A673 (cell line): ENCODE measurements at regions of chr6 and their contacts with region 1.

Region 1: GRCh38 chr6:30130887-30131862 is 4.8 kb upstream of the TRIM40 start:
- DNase-seq: peak; percentile 88
- H3K4me3 ChIP-seq: no peak overlapping the region
- H3K27ac ChIP-seq: no peak overlapping the region
- H3K4me1 ChIP-seq: no peaks in the 10 kb centered on the region
- H3K27me3 ChIP-seq: peaks cover 41% of the 10 kb centered on the region
- CTCF ChIP-seq: peak; percentile 100

Region 2: DNA sequence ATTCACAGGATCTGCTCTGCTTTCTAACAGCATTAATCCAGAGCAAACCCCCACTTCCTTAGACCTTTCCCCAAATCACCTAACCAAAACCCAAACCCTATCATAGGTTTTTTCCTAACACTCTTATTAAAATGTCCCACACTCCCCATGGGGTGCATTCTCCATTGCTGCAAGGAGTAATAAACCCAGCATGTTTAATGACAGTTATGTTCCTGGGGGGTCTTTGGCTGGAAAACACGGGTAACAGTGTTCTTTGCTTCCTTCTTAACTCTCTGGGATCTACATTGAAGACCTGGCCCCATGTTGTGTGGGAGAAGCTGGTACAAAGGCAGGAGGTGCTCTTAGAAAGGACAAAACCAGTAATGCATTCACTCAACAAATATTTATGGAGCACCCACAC is 34.3 kb before region 1 on chr6:
- CTCF ChIA-PET with region 1: interaction called, 11 read pairs
- POLR2A ChIA-PET with region 1: no interaction called
- intact Hi-C with region 1: no loop called
- DNase-seq: no peak
- H3K4me3 ChIP-seq: no peak overlapping the region
- H3K27ac ChIP-seq: no peak overlapping the region
- H3K4me1 ChIP-seq: peaks cover 12% of the 10 kb centered on the region
- H3K27me3 ChIP-seq: peaks cover 82% of the 10 kb centered on the region
- CTCF ChIP-seq: no peak

Region 3: GRCh38 chr6:30102970-30103874 is 28.0 kb before region 1 on chr6:
- CTCF ChIA-PET with region 1: interaction called, 47 read pairs
- POLR2A ChIA-PET with region 1: no interaction called
- intact Hi-C with region 1: loop called (anchors 1 kb)
- DNase-seq: peak; percentile 95
- H3K4me3 ChIP-seq: peak overlapping the region; percentile 48
- H3K27ac ChIP-seq: no peak overlapping the region
- H3K4me1 ChIP-seq: peaks cover 18% of the 10 kb centered on the region
- H3K27me3 ChIP-seq: peaks cover 43% of the 10 kb centered on the region
- CTCF ChIP-seq: peak; percentile 94

Region 4: GRCh38 chr6:30212865-30213666 is 81.9 kb after region 1 on chr6 and contains the start of gene TRIM26:
- CTCF ChIA-PET with region 1: interaction called, 18 read pairs
- POLR2A ChIA-PET with region 1: interaction called, 3 read pairs
- intact Hi-C with region 1: no loop called
- DNase-seq: peak; percentile 99
- H3K4me3 ChIP-seq: peak within 1 kb of the TSS; percentile 74
- H3K27ac ChIP-seq: peak within 1 kb of the TSS; percentile 82
- H3K4me1 ChIP-seq: peaks cover 22% of the 10 kb centered on the region
- H3K27me3 ChIP-seq: no peaks in the 10 kb centered on the region
- CTCF ChIP-seq: no peak
- total RNA-seq, gene TRIM26: 38.6 and 41.3 TPM in 2 replicates